Tibial artery (tissue), 4 donors: ENCODE measurements at regions of chr4 and their contacts with region 1.

Region 1: DNA sequence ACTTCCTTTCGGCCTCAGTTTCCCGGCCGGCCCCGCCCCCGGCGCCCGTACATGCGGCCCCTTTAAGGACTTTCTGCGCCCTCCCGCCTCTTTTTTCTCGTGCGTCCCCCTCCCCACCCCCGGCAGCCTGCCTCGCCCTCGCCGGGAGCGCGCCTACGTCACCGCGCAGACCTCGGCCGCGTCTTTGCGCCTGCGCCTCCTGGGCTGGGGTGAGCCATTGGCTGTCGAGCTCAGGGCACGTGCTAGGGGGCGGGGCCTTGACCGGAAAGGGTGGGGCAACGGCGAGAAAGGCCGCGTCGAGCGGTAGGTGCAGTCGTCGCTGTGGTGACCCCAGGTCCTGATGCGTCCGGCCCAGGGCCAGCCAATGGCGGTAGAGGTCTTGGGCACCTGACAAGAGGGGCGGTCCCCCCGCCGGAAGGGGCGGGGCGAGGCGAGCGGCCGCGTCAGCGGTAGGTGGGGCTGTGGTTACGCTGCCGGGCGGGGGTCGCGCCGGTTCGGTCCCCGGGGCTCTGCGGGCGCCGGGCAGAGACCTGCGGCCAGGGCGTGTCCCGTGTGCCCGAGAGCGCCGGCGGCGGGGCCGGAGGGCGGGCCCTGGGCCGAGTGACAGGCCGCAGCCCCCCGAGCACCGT is at the start of gene UVSSA:
- DNase-seq: peak; percentile 100
- H3K4me3 ChIP-seq: peak within 1 kb of the TSS; percentile 73 to 100
- H3K27ac ChIP-seq: peak within 1 kb of the TSS; percentile 92 to 98
- H3K4me1 ChIP-seq: peaks cover 0 to 32% (median 22%) of the 10 kb centered on the region in 4 donors
- H3K27me3 ChIP-seq: no peaks in the 10 kb centered on the region
- CTCF ChIP-seq: no peak

Region 2: DNA sequence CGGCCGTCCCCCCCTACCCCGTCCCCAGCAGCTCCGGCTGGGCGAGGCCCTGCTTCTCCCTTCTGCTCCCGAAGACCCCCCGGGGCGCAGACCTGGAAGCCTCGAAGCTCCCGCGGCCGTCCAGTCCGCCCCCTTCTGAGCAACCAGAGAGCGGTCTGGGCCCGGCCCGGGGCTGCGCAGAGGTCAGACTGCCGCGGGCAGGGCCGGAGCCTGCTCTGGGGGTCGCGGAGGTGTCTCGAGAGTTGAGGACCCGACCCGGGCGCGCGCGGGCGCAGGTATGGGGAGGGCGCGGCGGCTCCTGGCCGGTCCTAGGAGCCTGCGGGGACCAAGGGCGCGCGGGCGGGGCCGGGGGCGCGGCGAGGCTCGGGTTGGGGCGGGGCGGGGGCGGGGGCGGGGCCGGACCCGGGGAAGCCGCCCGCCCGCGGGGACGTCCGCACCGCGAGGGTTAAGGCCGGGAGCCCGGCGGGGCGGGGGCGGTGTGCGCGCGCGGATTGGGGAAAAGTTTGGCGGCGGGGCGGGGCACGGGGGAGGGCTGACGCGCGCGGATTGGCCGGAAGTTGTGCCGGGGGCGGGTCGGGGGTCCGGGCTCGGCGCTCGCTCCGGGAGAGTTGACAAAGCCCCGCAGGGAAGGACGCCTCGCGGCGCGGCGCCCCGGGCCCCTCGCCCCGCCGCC is 335.7 kb before region 1 on chr4 and contains the start of gene FGFRL1:
- intact Hi-C with region 1: loop called (anchors 2 kb)
- DNase-seq: peak; percentile 88 to 95
- H3K4me3 ChIP-seq: peak within 1 kb of the TSS; percentile 65 to 66
- H3K27ac ChIP-seq: peak within 1 kb of the TSS; percentile 69 to 84
- H3K4me1 ChIP-seq: peaks cover 0 to 43% (median 32%) of the 10 kb centered on the region in 4 donors
- H3K27me3 ChIP-seq: peaks cover 0 to 23% of the 10 kb centered on the region in 2 donors
- CTCF ChIP-seq: no peak

Region 3: DNA sequence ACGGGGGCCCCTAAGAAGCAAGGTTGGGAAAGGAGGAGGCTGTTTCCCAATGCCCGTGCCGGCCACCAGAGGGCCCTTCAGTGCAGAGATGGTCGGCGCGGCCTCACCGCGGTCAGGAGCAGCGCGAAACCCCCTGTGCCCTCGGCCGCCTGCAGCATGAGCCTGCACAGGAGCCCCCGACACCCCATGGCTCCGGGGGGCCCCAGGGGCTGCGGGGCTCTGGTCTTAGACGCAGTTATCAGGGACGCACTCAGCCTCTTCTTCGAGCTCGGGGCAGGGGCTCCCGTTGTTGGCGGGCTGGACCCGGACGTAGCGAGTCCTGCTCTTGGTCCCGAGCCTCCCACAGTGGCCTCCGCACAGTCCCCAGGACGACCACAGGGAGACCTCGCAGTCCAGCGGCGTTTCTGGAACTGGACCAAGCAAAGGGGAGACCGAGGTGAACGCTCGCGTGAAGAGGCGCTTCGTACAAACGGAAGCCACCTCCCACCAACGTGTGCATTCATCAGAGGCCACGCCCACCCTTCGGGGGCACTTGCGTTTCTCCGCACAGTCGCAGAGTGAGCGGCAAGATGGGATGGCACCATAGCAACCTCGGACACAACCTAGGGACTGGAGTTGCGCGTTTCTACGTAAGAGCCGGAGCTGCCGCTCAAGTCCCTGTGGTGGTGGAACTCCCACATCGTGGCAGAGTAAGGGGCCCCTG is 179.5 kb before region 1 on chr4:
- intact Hi-C with region 1: loop called (anchors 10 kb)
- DNase-seq: peak; percentile 77 to 87
- H3K4me3 ChIP-seq: peak overlapping the region; percentile 55 to 58
- H3K27ac ChIP-seq: peak overlapping the region in 1 of 2 donors; percentile 35
- H3K4me1 ChIP-seq: peaks cover 0 to 36% (median 25%) of the 10 kb centered on the region in 4 donors
- H3K27me3 ChIP-seq: peaks cover 0 to 33% of the 10 kb centered on the region in 2 donors
- CTCF ChIP-seq: peak; percentile 89 to 92

Region 4: DNA sequence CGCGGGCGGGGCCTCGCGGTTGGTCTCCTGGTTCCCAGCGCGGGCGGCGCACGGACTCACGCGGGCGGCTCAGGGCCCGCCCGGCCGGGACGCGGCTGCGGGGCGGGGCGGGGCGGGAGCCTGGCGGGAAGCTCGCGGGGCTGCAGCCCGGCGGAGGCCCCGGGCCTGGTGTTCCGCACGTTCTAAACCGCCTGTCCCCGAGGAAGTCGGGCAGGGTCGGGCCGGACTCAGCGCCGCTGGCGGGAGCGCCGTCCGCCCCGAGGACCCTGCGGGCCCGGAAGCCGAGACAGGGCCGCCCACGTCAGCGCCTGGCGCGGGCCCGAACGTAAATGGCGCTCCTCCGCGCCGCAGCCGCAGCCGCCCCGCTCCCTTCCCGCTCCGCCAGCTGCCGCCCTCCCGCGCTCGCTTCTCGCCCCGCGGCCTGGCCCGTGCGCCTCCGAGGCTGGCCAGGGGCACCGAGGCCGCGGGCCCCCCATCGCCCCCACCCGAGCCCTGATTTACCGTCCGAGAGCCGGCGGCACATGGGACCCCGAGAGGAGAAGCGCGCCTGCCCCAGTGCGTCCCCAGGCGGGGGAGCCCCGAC is 97.7 kb before region 1 on chr4:
- intact Hi-C with region 1: loop called (anchors 1 kb)
- DNase-seq: peak; percentile 80 to 92
- H3K4me3 ChIP-seq: peak overlapping the region; percentile 61 to 67
- H3K27ac ChIP-seq: peak overlapping the region; percentile 93 to 96
- H3K4me1 ChIP-seq: peaks cover 15 to 48% (median 42%) of the 10 kb centered on the region in 4 donors
- H3K27me3 ChIP-seq: no peaks in the 10 kb centered on the region
- CTCF ChIP-seq: no peak

Region 5: DNA sequence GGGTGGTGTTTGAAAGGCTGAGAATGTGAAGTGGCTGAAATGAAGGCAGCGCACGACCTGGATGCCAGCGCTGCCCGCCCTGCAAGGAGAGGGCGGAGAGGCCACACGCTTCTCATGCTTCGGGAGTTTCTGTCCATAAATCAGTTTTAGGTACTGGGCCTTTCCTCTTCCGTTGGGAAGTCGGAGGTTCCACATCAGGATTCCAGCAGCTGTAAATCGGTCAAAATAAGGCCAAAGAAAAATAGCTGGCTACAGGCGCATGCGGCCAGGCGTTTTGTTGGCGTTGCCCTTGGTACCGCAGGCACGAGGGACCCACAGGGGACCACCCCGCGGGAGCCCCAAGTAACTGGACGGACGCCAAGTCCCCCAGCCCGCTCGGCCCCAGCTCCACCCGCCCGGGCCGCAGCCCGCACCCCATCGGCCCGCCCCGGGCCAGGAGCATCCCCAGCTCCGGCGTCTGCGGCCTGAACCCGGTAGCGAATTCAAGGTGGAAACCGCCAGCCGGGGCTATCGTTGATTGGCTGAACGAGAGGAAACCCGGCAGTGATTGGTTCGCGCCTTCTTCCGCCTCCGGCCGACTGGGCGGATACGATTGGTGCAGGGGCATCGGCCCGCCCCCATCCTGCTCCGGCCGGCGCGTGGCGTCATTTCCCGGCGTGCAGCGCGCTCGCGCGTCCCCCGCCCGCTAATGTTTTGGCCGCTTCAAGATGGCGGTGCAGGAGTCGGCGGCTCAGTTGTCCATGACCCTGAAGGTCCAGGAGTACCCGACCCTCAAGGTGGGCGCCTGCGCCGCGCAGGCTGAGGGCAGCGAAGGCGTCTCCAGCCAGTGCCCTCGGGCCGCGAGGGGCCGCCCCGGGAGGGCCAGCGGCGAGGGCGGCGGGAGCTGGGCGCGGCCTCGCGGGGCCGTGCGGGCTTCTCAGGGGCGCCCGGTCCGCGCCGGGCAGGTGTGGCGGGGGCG is 57.4 kb before region 1 on chr4 and contains the start of gene MAEA:
- intact Hi-C with region 1: loop called (anchors 1 kb)
- DNase-seq: peak; percentile 96 to 98
- H3K4me3 ChIP-seq: peak within 1 kb of the TSS; percentile 78 to 85
- H3K27ac ChIP-seq: peak within 1 kb of the TSS; percentile 77 to 80
- H3K4me1 ChIP-seq: peaks cover 4 to 51% (median 35%) of the 10 kb centered on the region in 4 donors
- H3K27me3 ChIP-seq: no peaks in the 10 kb centered on the region
- CTCF ChIP-seq: no peak

Region 6: GRCh38 chr4:1381944-1382541 is 35.1 kb after region 1 on chr4:
- intact Hi-C with region 1: no loop called
- DNase-seq: peak in 1 of 2 donors; percentile 51
- H3K4me3 ChIP-seq: no peak overlapping the region
- H3K27ac ChIP-seq: no peak overlapping the region
- H3K4me1 ChIP-seq: no peaks in the 10 kb centered on the region
- H3K27me3 ChIP-seq: no peaks in the 10 kb centered on the region
- CTCF ChIP-seq: no peak

Region 7: DNA sequence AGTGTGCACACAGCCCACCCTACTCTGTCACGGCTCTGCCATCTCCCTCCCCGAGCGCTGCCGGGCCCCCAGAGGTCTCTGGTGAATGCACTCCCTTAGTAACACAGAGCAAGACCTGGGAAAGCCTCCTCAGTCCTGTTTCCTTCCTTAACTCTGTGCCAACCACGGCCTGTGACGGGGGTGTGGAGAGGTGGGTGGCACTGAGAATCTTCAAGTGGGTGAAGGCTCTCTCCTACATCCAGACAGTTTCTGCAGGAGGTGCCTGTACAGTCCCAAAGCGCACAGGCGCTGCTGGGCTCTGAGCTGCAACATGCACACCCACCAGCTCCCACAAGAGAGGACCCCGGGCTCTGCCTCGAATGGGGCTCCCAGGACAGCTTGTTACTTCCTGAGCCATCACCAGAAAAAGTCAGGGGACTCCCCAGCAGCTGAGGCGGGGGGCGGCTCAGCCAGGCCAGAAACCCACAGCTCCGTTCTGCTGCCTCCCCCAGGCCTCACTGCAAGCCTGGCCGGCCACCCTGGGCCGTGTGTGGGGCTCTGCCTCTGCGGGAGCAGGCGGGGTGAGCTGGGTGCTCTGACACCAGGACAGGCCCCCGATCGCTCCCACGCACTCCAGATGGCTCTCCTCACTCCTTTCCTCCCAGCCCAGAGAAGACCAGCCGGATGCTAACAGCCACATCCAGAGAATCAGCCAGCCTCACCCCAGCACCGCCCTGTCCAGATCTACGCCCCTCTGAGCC is 307.5 kb after region 1 on chr4:
- intact Hi-C with region 1: no loop called
- DNase-seq: no peak
- H3K4me3 ChIP-seq: no peak overlapping the region
- H3K27ac ChIP-seq: no peak overlapping the region
- H3K4me1 ChIP-seq: no peaks in the 10 kb centered on the region
- H3K27me3 ChIP-seq: no peaks in the 10 kb centered on the region
- CTCF ChIP-seq: no peak

Region 8: DNA sequence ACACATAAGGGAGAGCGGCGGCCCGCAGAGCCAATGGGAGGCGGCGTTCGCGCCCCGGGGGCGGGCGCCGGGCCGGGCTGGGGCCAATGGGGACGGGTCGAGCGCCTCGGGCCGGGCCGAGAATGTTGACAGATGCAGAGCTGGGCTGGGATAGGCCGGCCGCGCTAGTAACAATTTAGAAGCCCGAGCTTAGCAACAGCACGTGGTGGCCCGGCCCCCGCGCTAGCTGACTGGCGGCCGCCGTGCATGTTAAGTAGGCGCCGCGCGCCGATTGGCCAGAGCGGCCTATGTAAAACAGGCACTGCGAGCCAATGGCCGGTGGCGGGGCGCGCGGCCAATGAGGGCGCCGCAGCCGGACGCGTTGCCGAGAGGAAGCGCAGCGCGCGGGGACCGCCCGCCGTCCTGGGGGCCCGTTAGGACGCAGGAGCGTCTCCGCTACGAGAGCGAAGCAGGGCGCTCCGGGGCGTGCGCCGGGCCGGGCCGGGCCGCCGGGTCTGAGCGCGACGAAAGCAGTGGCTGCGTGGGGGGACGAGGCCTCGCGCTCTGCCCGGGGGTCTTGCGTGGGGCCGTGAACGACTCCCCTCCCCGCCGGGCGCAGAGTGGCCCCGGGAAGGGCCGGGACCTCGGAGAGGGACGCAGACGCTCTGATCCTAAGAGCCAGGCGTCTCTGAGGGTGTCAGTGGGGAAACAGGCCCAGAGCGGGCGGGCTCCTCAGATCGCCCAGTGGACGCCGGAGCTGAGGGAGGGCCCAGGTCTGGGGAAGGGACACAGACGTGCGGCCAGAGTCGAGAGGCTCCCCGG is 915.4 kb after region 1 on chr4:
- intact Hi-C with region 1: no loop called
- DNase-seq: peak; percentile 100
- H3K4me3 ChIP-seq: peak overlapping the region; percentile 93 to 95
- H3K27ac ChIP-seq: peak overlapping the region; percentile 95 to 96
- H3K4me1 ChIP-seq: peaks cover 3 to 74% (median 56%) of the 10 kb centered on the region in 4 donors
- H3K27me3 ChIP-seq: peaks cover 0 to 3% of the 10 kb centered on the region in 2 donors
- CTCF ChIP-seq: peak in 1 of 2 experiments; percentile 8